Lower leg skin (tissue), 4 donors: ENCODE measurements at regions of chr4 and their contacts with region 1.

Region 1: DNA sequence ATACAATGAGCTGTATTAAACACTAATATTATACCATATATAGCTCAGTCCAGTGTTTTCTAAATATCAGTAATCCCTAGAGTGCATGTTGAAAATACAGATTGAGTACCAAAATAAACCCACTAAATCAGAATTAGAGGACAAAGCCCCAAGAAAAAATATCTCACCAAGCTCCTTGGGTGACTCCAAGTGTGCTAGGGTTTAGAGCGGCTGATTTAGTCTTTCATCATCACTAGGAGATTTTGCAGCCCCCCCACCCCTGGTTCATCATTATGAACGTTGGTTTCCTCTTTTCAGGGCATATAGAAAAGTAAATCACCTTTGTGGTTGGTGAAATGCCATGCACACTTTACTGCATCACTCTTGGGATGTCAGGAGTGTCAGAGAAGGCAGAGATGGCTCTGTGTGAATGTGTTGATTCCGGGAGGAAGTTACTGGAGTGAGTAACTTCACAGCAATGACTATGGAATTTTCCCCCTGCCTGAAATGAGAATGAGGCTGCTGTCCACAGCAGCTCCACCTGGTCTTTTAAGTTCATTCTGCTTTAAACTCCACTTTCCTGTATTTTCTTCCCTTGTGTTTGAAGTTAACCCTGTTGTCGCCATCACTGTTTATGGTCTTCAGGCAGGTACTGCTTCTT is 25.2 kb upstream of the ANAPC4 start:
- DNase-seq: no peak
- H3K4me3 ChIP-seq: no peak overlapping the region
- CTCF ChIP-seq: no peak
- POLR2A ChIP-seq: no peak

Region 2: GRCh38 chr4:25172961-25173915 is 178.7 kb before region 1 on chr4:
- intact Hi-C with region 1: loop called (anchors 10 kb)
- DNase-seq: peak in 1 of 2 donors; percentile 80
- H3K4me3 ChIP-seq: no peak overlapping the region
- CTCF ChIP-seq: no peak
- POLR2A ChIP-seq: no peak